ENCODE measurements at regions of chr19 and their contacts with region 1.

Region 1: DNA sequence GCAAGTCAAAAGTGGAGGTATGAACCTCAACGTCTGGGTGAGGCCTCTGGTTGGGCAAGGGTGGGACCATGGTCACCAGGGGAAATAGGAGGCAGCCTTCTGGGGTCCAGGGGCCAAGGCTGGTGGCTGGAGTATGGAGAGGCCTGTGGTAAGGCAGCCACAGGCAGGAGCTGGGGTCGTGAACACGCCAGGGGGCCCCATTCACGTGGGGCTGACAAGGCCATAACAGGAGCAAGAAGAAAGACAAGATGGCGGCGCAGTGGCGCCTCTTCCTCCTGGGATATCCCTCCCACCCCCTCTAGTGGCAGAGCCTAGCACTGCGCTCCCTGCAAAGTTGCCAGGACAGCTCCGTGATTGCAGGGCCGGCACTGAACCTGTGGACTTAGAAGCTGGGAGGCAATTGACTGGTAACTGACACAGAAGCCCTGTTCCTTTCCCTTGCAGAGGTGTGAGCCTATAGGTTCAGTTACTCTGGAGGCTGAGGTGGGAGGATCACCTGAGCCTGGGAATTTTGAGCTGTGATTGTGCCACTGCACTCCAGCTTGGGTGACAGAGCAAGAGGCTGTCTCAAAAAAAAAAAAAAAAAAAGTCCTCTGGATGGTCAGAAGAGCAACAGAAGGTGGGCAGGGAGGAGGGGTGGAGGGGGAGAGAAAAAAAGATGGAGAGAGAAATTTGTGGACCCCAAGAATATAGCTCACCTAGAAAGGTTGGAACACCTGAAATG is 19.7 kb upstream of the EDDM13 start:
- DNase-seq: peak; percentile 56 to 74
- ATAC-seq: peak in 3 of 4 donors; percentile 46 to 60 (median 59)
- H3K4me3 ChIP-seq: no peak overlapping the region
- H3K27ac ChIP-seq: no peak overlapping the region
- H3K4me1 ChIP-seq: no peaks in the 10 kb centered on the region
- H3K27me3 ChIP-seq: no peaks in the 10 kb centered on the region
- CTCF ChIP-seq: peak; percentile 61

Region 2: GRCh38 chr19:56105090-56105701 is 147.7 kb before region 1 on chr19:
- intact Hi-C with region 1: no loop called
- DNase-seq: peak; percentile 72 to 88
- ATAC-seq: peak; percentile 80 to 90 (median 85)
- H3K4me3 ChIP-seq: peak overlapping the region; percentile 16
- H3K27ac ChIP-seq: peak overlapping the region; percentile 59
- H3K4me1 ChIP-seq: peaks cover 33% of the 10 kb centered on the region
- H3K27me3 ChIP-seq: no peaks in the 10 kb centered on the region
- CTCF ChIP-seq: peak; percentile 77

Region 3: GRCh38 chr19:56333505-56333904 is 80.6 kb after region 1 on chr19:
- intact Hi-C with region 1: loop called in 1 of 2 experiments (anchors 5 kb)
- DNase-seq: no peak
- ATAC-seq: no peak
- H3K4me3 ChIP-seq: no peak overlapping the region
- H3K27ac ChIP-seq: no peak overlapping the region
- H3K4me1 ChIP-seq: no peaks in the 10 kb centered on the region
- H3K27me3 ChIP-seq: no peaks in the 10 kb centered on the region
- CTCF ChIP-seq: peak; percentile 31

Region 4: DNA sequence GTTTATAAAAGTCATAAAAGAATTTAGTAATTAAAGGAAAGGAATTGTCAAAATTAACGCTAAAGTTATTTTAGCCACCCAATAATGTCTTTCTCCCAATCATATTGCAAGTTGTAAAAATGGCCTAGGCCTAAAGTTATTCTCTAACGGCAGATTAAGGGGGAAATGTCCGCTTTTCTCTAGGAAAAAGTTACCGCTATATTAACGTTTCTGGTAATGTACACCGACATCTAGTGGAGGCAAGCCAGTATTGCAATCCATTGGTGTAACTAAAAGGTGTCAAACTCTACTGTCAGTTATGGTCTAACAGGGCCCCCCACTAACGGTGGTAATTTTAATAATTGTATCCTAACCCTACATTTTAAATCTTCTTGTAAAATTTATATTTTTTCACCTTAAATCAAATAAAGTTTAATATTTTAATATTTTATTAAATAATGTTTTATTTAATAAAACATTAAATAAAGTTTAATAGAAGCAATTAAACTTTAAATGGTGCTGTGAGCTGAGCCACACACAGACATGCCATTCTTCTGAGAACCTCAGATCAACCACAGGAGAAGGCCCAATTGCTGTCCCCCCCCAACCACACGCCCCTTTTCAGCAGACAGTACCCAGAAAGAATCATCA is 97.7 kb after region 1 on chr19:
- intact Hi-C with region 1: loop called (anchors 5 kb)
- DNase-seq: no peak
- ATAC-seq: peak in 2 of 4 donors; percentile 51 to 59
- H3K4me3 ChIP-seq: peak overlapping the region; percentile 34
- H3K27ac ChIP-seq: no peak overlapping the region
- H3K4me1 ChIP-seq: no peaks in the 10 kb centered on the region
- H3K27me3 ChIP-seq: no peaks in the 10 kb centered on the region
- CTCF ChIP-seq: peak; percentile 86

Measured in psoas muscle (tissue), 8 donors.